HCT116 (cell line): ENCODE measurements at regions of chr19 and their contacts with region 1.

Region 1: GRCh38 chr19:33998739-33999345 is 173.5 kb upstream of the LSM14A start:
- DNase-seq: no peak
- ATAC-seq: no peak
- H3K4me3 ChIP-seq: no peak overlapping the region
- H3K27ac ChIP-seq: no peak overlapping the region
- H3K4me1 ChIP-seq: no peaks in the 10 kb centered on the region
- H3K27me3 ChIP-seq: no peaks in the 10 kb centered on the region
- CTCF ChIP-seq: peak; percentile 33 to 79 (median 53); a peak in 4 of 6 replicates
- POLR2A ChIP-seq: no peak
- RAD21 ChIP-seq: peak; percentile 43

Region 2: DNA sequence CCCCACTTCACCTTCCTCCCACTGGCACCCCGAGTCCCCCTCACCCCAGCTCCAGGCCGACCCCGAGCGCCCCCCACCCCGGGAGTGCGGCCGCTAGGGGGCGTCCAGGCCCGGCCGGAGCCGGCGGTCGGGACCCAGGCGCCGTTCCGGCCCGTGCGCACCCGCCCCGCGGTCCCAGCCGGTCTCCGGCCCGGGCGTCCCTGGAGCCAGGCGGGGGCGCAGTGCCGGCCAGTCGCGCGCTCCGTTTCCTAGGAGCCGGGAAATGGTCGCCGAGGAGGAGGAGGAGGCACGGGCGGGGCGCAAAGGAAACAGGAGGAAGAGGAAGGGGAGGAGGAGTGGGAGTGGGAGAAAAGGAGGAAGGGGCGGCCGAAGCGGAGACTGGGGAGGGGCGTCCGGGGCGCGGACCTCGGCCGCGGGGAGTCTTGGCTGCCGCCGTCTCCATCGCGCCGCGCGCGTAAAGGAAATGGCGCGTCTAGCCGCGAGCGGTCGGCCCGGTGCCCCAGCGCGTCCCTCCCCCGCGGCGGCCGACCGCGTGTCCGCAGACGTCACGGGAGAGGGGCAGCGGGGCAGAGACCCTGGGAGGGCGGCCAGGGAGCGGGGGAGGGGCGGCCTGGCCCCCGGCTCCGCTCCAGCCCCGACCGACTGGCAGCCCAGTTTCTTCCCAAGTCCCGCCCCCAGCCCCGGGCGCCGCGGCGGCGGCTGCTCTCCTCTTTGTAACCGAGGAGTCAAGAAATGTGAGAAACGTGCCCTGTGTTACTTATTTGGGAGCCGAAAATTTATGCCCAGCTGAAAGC is 203.3 kb before region 1 on chr19:
- CTCF ChIA-PET with region 1: interaction called, 16 read pairs
- POLR2A ChIA-PET with region 1: interaction called, 3 read pairs
- RAD21 ChIA-PET with region 1: no interaction called
- intact Hi-C with region 1: loop called (anchors 5 kb)
- DNase-seq: no peak
- ATAC-seq: peak; percentile 77
- H3K4me3 ChIP-seq: peak overlapping the region; percentile 59 to 65
- H3K27ac ChIP-seq: peak overlapping the region; percentile 83
- H3K4me1 ChIP-seq: peaks cover 7 to 15% of the 10 kb centered on the region in 2 experiments; a peak in 3 of 4 replicates
- H3K27me3 ChIP-seq: no peaks in the 10 kb centered on the region
- CTCF ChIP-seq: peak; percentile 61 to 75 (median 74); a peak in 5 of 6 replicates
- POLR2A ChIP-seq: no peak
- RAD21 ChIP-seq: peak; percentile 44; the same call in 1 of the 2 replicates

Region 3: GRCh38 chr19:33883859-33884519 is 114.9 kb before region 1 on chr19:
- CTCF ChIA-PET with region 1: no interaction called
- POLR2A ChIA-PET with region 1: no interaction called
- RAD21 ChIA-PET with region 1: no interaction called
- intact Hi-C with region 1: no loop called
- DNase-seq: no peak
- ATAC-seq: no peak
- H3K4me3 ChIP-seq: no peak overlapping the region
- H3K27ac ChIP-seq: no peak overlapping the region
- H3K4me1 ChIP-seq: no peaks in the 10 kb centered on the region
- H3K27me3 ChIP-seq: no peaks in the 10 kb centered on the region
- CTCF ChIP-seq: no peak
- POLR2A ChIP-seq: no peak
- RAD21 ChIP-seq: no peak

Region 4: DNA sequence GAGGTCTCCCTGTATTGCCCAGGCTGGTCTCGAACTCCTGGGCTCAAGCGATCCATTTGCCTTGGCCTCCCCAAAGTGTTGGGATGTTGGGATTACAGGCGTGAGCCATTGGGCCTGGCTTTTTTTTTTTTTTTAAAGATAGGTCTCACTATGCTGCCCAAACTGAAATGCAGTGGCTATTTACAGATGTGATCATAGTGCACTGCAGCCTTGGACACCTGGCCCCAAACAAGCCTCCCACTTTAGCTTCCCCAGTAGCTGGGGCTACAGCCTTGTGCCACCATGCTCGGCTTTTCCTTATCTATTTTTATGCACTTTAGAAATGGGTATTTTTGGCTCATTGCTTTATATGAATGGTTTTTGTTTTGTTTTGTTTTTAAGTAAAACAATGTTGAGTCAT is 210.9 kb after region 1 on chr19:
- CTCF ChIA-PET with region 1: no interaction called
- POLR2A ChIA-PET with region 1: no interaction called
- RAD21 ChIA-PET with region 1: no interaction called
- intact Hi-C with region 1: no loop called
- DNase-seq: no peak
- ATAC-seq: no peak
- H3K4me3 ChIP-seq: no peak overlapping the region
- H3K27ac ChIP-seq: no peak overlapping the region
- H3K4me1 ChIP-seq: no peaks in the 10 kb centered on the region
- H3K27me3 ChIP-seq: no peaks in the 10 kb centered on the region
- CTCF ChIP-seq: no peak
- POLR2A ChIP-seq: no peak
- RAD21 ChIP-seq: no peak